HEK293T (cell line): ENCODE measurements at regions of chr12 and their contacts with region 1.

Region 1: DNA sequence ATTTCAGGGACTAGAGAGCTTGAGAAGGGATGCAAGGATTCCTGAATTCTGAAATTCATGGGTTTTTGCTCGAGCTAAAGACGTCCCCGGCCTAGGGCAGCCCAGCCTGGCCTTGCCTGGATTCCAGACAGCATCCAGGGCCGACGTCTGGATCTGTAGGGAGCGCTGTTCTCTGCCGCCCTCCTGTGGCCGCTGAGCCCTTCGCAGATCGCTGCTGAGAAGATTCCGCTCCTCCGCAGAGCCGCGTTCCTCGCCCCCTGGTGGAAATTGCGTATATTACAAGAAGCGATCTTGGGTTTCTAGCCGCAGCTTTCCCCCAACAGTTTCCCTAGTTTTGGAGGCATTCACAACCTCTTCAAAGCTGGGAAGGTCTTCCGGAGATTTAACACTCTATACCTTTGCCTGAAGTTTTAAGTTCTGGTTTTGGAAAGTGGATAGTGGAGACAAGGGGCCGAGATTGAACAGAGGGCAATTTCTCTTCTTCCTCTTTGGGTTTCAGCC is 5.1 kb downstream of the CISTR start:
- DNase-seq: peak; percentile 90

Region 2: DNA sequence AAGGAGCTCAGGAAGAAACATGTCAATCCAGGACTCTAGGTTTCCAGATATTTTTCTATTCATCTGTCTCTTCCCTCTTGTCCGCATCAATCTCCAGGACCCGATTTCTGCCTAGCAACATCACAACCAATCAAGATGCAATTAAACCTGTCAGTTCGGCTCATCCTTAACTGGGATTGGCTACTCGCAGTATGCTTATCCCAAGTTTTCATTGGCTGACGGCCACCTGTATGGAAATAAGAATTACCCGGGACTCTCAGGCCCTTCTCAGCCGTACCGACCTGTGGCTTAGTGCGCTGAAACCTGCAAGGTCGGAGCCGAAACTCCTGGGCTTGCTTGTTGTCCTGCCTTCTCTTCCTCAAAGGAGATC is 50.4 kb before region 1 on chr12:
- CTCF ChIA-PET with region 1: interaction called, 40 read pairs
- POLR2A ChIA-PET with region 1: interaction called, 7 read pairs
- DNase-seq: peak; percentile 94

Region 3: GRCh38 chr12:53701518-53702260 is 45.0 kb before region 1 on chr12:
- CTCF ChIA-PET with region 1: interaction called, 129 read pairs
- POLR2A ChIA-PET with region 1: interaction called, 7 read pairs
- DNase-seq: peak; percentile 77

Region 4: GRCh38 chr12:53709671-53710070 is 37.0 kb before region 1 on chr12:
- CTCF ChIA-PET with region 1: interaction called, 129 read pairs
- POLR2A ChIA-PET with region 1: no interaction called
- DNase-seq: no peak

Region 5: GRCh38 chr12:53727310-53728041 is 19.2 kb before region 1 on chr12 and contains the start of gene CALCOCO1:
- CTCF ChIA-PET with region 1: interaction called, 25 read pairs
- POLR2A ChIA-PET with region 1: interaction called, 4 read pairs
- DNase-seq: peak; percentile 97

Region 6: GRCh38 chr12:53733051-53733806 is 13.4 kb before region 1 on chr12:
- CTCF ChIA-PET with region 1: interaction called, 25 read pairs
- POLR2A ChIA-PET with region 1: interaction called, 4 read pairs
- DNase-seq: no peak

Region 7: DNA sequence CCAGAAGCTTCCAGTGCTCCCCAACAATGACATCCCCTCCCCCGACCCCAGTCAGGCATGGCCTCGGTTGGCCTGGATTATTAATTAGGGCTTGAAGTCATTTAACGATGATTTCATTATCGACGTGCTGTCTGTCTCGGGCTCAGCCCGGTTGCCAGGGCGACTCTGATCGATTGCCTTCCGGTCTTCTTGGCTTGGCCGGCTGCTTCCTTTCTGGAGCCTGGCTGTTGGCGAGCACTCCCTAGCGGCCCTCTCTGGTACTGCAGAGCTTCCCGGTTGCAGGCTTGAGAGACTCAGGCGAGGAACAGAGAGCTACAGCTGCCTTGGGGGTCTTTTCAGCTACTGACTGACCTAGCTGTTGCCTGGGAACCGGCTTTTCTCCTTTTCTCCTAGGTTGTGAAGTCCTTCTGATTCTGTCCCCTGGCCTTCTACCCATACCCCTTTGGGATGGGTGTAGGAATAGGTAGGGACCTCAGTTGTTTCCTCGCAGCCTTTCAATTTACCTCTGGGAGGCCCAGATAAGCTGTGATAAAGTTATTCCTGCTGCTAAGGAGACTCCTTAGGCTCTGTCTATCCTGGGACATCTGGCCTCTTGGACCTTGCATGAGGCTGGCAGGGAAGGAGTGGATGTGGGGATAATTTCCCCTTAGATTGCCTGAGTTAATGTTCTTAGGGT is 10.6 kb after region 1 on chr12:
- CTCF ChIA-PET with region 1: interaction called, 27 read pairs
- POLR2A ChIA-PET with region 1: interaction called, 3 read pairs
- DNase-seq: peak; percentile 88